Heart right ventricle (tissue), 16 donors: ENCODE measurements at regions of chr3 and their contacts with region 1.

Region 1: GRCh38 chr3:115217678-115218451 is 70.8 kb upstream of the ZBTB20 start:
- DNase-seq: peak in 1 of 2 donors; percentile 26
- ATAC-seq: peak in 6 of 8 donors; percentile 67 to 82 (median 70)
- H3K4me3 ChIP-seq: no peak overlapping the region
- H3K27ac ChIP-seq: peak overlapping the region in 1 of 10 donors; percentile 9
- H3K4me1 ChIP-seq: peaks cover 0 to 27% (median 14%) of the 10 kb centered on the region in 9 donors
- H3K27me3 ChIP-seq: no peaks in the 10 kb centered on the region
- CTCF ChIP-seq: peak; percentile 45 to 80 (median 70)

Region 2: DNA sequence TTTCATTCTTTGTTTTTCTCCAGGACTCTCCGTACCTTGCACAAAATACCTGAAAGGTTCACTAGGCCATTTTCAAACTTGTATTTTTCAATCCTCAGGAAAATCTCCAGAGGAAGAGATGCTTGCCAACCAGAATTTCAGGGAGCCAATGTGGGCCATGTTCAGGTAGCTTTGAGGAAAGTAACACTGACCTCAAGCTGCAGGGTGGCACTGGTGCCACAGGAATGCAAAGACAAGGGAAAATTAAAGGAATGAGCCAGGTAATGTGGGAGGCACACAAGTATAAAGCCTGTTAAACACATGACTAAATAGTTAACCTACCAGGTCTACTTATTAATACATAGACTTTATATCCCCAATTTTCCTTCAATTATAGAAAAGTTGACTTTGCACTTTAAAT is 353.5 kb after region 1 on chr3:
- intact Hi-C with region 1: loop called in 3 of 10 experiments (anchors 5 to 10 kb)
- DNase-seq: no peak
- ATAC-seq: peak in 1 of 8 donors; percentile 56
- H3K4me3 ChIP-seq: no peak overlapping the region
- H3K27ac ChIP-seq: no peak overlapping the region
- H3K4me1 ChIP-seq: no peaks in the 10 kb centered on the region
- H3K27me3 ChIP-seq: no peaks in the 10 kb centered on the region
- CTCF ChIP-seq: peak in 8 of 9 donors; percentile 11 to 50 (median 23)

Region 3: DNA sequence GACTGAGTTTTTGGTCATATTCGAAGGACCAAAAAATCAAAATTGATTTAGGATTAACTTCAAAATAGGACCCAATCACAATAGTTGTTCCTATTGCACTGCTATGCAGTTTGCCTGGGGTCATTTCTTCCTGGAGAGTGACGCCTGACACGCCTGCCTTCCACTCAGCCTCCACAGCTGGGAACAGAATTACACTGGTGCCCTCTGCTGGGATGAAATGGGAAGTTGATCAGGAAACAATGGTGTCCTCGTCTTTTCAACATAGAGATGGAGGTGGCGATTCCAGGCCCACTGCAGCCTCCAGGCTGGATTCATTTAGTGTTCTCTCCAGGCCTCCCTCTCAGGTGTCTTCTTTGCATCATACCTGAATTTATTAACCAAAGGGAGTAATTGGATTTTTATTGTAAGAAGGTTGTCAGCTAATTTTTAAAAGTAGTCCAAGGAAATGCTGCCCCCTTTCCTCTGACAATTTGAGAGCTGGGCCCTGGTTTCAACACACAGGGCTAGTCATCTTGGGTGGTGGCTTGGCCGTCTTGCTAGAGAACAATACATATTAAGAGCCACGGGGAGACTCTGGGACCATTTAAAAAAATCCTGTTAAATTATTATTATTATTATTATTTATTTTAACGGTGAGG is 475.1 kb after region 1 on chr3:
- intact Hi-C with region 1: loop called (anchors 1 to 5 kb)
- DNase-seq: peak; percentile 39 to 80
- ATAC-seq: peak; percentile 87 to 98 (median 95)
- H3K4me3 ChIP-seq: no peak overlapping the region
- H3K27ac ChIP-seq: peak overlapping the region in 1 of 10 donors; percentile 59
- H3K4me1 ChIP-seq: peaks cover 0 to 10% (median 0%) of the 10 kb centered on the region in 9 donors
- H3K27me3 ChIP-seq: no peaks in the 10 kb centered on the region
- CTCF ChIP-seq: peak; percentile 65 to 90 (median 82)

Region 4: GRCh38 chr3:115783938-115784738 is 566.3 kb after region 1 on chr3:
- intact Hi-C with region 1: loop called in 9 of 10 experiments (anchors 2 to 10 kb)
- DNase-seq: peak; percentile 90 to 93
- ATAC-seq: peak; percentile 95 to 98 (median 96)
- H3K4me3 ChIP-seq: peak overlapping the region; percentile 32 to 86 (median 70)
- H3K27ac ChIP-seq: peak overlapping the region; percentile 74 to 97 (median 95)
- H3K4me1 ChIP-seq: peaks cover 0 to 18% (median 8%) of the 10 kb centered on the region in 9 donors
- H3K27me3 ChIP-seq: peaks cover 0 to 10% (median 0%) of the 10 kb centered on the region in 7 donors
- CTCF ChIP-seq: peak; percentile 94 to 99 (median 97)

Region 5: GRCh38 chr3:115819785-115820384 is 602.0 kb after region 1 on chr3:
- intact Hi-C with region 1: loop called in 6 of 10 experiments (anchors 5 to 10 kb)
- DNase-seq: peak in 1 of 2 donors; percentile 77
- ATAC-seq: peak; percentile 70 to 84 (median 75)
- H3K4me3 ChIP-seq: no peak overlapping the region
- H3K27ac ChIP-seq: no peak overlapping the region
- H3K4me1 ChIP-seq: no peaks in the 10 kb centered on the region
- H3K27me3 ChIP-seq: no peaks in the 10 kb centered on the region
- CTCF ChIP-seq: peak; percentile 79 to 100 (median 94)